Dendritic cell treated with granulocyte-macrophage colony-stimulating factor and Interleukin-4, amounts not matched to agents 40 ng/mL and 50 ng/mL, for 4 days (primary cell): ENCODE measurements at regions of chr10 and their contacts with region 1.

Region 1: GRCh38 chr10:80599424-80599847 is 61.7 kb downstream of the SH2D4B start:
- H3K4me3 Mint-ChIP-seq: no peak overlapping the region
- H3K27ac Mint-ChIP-seq: peak overlapping the region; percentile 75
- H3K4me1 Mint-ChIP-seq: peaks cover 41% of the 10 kb centered on the region
- H3K27me3 Mint-ChIP-seq: peaks cover 2% of the 10 kb centered on the region

Region 2: DNA sequence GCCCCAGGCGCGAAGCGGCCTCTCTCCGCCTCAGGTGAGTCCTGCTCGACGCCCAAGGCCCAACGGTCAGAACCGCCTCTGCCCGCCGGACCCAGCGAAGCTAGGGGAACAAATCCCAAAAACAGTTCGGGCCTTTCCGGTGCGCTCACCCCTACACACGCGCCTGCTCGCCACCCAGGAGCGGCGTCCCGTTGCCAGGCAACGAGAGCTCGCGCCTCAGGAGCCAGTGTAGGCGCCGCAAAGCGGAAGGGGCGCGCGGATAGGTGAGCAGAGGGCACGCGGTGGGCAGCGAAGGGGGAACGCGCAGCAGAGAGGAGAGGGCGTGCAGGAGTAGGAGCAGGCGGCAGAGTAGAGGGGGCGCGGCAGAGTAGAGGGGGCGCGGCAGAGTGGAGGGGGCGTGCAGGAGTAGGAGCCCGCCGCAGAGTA is 242.9 kb before region 1 on chr10 and contains the starts of genes DYDC1 and DYDC2:
- intact Hi-C with region 1: no loop called
- H3K4me3 Mint-ChIP-seq: peak within 1 kb of the TSS; percentile 83
- H3K27ac Mint-ChIP-seq: peak within 1 kb of the TSS; percentile 39
- H3K4me1 Mint-ChIP-seq: peaks cover 13% of the 10 kb centered on the region
- H3K27me3 Mint-ChIP-seq: peaks cover 39% of the 10 kb centered on the region

Region 3: DNA sequence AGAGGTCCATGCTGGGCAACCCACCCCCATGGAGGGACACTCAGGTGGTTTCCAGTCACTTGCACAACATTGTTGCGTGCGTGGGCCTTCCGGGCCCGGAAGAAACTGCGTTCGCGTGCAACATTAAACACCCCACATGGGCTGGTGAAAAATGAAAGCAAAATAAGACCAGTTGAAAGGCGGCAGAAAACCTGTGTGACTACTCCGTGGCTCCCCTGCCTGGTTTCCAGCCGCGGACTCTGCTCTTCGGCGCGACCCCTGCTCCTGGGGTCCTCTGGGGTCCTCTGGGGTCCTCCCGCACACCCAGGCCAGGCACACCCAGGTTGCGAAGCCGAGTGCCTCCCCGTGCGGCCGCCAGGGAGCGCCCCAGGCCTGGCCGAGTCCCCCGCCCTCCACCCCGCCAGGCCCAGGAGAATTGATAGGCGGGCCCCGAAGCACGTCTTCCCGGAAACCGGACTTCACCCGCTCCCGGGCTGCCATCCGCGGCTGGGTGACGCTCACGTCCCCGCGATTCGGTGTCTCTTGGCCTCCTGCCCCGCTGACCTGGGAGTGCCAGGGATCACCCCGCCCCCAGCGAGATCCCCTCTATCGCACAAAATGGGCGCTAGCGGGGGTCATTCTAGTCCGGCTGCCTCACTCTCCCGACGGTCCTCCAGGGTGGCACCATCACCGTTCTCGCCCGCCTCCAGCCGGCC is 63.6 kb before region 1 on chr10:
- intact Hi-C with region 1: loop called (anchors 5 kb)
- H3K4me3 Mint-ChIP-seq: peak overlapping the region; percentile 82
- H3K27ac Mint-ChIP-seq: peak overlapping the region; percentile 94
- H3K4me1 Mint-ChIP-seq: peaks cover 21% of the 10 kb centered on the region
- H3K27me3 Mint-ChIP-seq: peaks cover 4% of the 10 kb centered on the region

Region 4: GRCh38 chr10:80718024-80718423 is 118.6 kb after region 1 on chr10:
- intact Hi-C with region 1: no loop called
- H3K4me3 Mint-ChIP-seq: no peak overlapping the region
- H3K27ac Mint-ChIP-seq: no peak overlapping the region
- H3K4me1 Mint-ChIP-seq: no peaks in the 10 kb centered on the region
- H3K27me3 Mint-ChIP-seq: peaks cover 4% of the 10 kb centered on the region

Region 5: GRCh38 chr10:81068460-81068859 is 469.0 kb after region 1 on chr10:
- intact Hi-C with region 1: no loop called
- H3K4me3 Mint-ChIP-seq: no peak overlapping the region
- H3K27ac Mint-ChIP-seq: no peak overlapping the region
- H3K4me1 Mint-ChIP-seq: no peaks in the 10 kb centered on the region
- H3K27me3 Mint-ChIP-seq: no peaks in the 10 kb centered on the region